ENCODE measurements at regions of chr15 and their contacts with region 1.

Region 1: DNA sequence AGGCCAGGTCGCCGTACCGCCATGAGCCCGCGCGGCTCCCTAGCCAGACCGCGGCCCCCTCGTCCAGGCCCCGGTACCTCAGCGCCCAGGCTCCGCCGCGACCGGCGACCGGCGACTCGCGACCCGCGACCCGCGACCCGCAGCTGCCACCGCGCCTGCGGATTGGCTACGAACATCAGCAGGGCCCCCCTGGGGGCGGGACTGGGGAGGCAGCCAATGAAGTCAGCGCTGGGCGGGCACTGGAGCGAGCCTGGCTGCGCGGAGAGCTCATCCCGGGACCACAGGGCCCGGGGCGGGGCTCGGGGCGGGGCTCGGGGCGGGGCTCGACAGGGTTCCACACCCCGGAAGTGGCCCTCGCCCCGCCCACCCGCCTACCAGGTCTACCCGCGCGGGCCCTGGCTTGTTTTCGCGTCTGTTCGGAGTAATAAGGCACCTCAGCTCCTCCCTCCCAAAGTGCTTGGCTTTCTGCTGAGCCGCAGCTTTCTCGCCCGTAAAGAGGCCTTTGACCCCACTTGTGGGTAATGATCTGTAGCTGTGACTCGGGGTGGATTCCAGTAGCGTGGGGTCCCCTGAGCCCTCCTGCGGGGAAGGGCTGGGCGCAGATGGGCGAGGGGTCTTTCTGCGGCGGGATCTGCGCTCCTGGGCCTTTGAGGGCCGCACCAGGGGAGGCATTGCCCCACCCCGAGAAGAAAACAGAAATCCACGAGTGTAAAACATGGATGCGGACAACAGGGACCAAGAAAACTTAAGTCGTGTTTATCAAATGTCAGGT is at the start of gene LYSMD4:
- DNase-seq: peak; percentile 97 to 99 (median 98)
- ATAC-seq: peak; percentile 99
- H3K4me3 ChIP-seq: peak within 1 kb of the TSS; percentile 69 to 80
- H3K4me3 Mint-ChIP-seq: peak within 1 kb of the TSS; percentile 89
- H3K27ac ChIP-seq: peak within 1 kb of the TSS; percentile 62 to 87
- H3K27ac Mint-ChIP-seq: peak within 1 kb of the TSS; percentile 95
- H3K4me1 ChIP-seq: peaks cover 13% of the 10 kb centered on the region
- H3K4me1 Mint-ChIP-seq: peaks cover 19% of the 10 kb centered on the region
- H3K27me3 ChIP-seq: no peaks in the 10 kb centered on the region
- H3K27me3 Mint-ChIP-seq: no peaks in the 10 kb centered on the region
- CTCF ChIP-seq: no peak
- total RNA-seq, gene LYSMD4: 7.6 to 7.7 TPM

Region 2: DNA sequence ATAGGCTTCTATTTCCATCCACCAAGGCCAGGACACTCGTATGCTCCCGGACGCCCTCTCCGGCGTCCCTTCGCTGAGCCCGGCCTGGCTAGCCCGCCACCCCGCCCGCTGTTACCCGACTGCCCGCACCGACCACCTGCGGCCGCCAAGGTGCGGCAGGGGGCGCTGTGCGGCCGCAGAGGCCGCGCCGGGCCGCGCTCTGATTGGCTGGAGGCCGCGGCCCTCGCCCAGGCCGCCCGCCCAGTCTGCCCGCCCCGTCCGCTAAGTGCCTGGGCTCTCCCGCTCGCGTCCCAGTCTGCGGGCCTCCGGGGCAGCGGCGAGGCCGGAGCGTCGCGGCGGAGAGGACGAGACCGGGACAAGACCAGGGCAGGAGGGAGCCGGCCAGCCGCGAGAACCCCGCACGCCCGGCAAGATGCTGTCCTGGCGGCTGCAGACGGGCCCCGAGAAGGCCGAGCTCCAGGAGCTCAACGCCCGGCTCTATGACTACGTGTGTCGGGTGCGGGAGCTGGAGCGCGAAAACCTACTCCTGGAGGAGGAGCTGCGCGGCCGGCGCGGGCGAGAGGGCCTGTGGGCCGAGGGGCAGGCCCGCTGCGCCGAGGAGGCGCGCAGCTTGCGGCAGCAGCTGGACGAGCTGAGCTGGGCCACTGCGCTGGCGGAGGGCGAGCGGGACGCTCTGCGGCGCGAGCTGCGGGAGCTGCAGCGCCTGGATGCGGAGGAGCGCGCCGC is 628.5 kb before region 1 on chr15 and contains the start of gene SYNM:
- CTCF ChIA-PET with region 1: no interaction called
- POLR2A ChIA-PET with region 1: no interaction called
- intact Hi-C with region 1: loop called in 1 of 2 experiments (anchors 10 kb)
- DNase-seq: peak in 2 of 9 experiments; percentile 49 to 60
- ATAC-seq: peak; percentile 15
- H3K4me3 ChIP-seq: peak within 1 kb of the TSS in 1 of 2 experiments; percentile 34
- H3K4me3 Mint-ChIP-seq: peak within 1 kb of the TSS; percentile 61
- H3K27ac ChIP-seq: peak within 1 kb of the TSS in 1 of 2 experiments; percentile 43
- H3K27ac Mint-ChIP-seq: peak within 1 kb of the TSS; percentile 45
- H3K4me1 ChIP-seq: no peaks in the 10 kb centered on the region
- H3K4me1 Mint-ChIP-seq: peaks cover 19% of the 10 kb centered on the region
- H3K27me3 ChIP-seq: peaks cover 0 to 5% of the 10 kb centered on the region in 2 experiments
- H3K27me3 Mint-ChIP-seq: peaks cover 33% of the 10 kb centered on the region
- CTCF ChIP-seq: no peak
- total RNA-seq, gene SYNM: 3.3 to 3.9 TPM

Region 3: DNA sequence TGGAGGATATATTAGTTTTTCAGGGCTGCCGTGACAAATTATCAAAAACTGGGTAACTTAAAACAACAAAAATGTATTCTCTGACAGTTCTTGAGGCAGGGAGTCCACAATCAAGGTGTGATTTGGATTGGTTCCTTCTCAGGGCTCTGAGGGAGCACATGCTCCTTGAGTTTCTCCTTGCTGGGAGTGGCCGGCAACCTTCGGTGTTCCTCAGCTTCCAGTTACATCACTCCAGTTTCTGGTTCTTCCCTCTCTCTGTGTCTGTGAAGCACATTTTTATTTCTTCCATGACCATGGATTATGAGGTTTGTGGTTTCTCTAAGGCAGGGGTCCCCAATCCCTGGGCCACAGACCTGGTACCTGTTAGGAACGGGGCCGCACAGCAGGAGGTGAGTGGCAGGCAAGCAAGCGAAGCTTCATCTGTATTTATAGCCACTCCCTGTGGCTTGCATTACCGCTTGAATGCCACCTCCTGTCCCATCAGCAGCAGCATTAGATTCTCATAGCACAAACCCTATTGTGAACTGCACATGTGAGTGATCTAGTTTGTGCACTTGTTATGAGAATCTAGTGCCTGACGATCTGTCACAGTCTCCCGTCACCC is 457.8 kb before region 1 on chr15:
- CTCF ChIA-PET with region 1: interaction called, 13 read pairs
- POLR2A ChIA-PET with region 1: no interaction called
- intact Hi-C with region 1: loop called in 1 of 2 experiments (anchors 1 kb)
- DNase-seq: no peak
- ATAC-seq: no peak
- H3K4me3 ChIP-seq: no peak overlapping the region
- H3K4me3 Mint-ChIP-seq: no peak overlapping the region
- H3K27ac ChIP-seq: no peak overlapping the region
- H3K27ac Mint-ChIP-seq: no peak overlapping the region
- H3K4me1 ChIP-seq: no peaks in the 10 kb centered on the region
- H3K4me1 Mint-ChIP-seq: peaks cover 13% of the 10 kb centered on the region
- H3K27me3 ChIP-seq: no peaks in the 10 kb centered on the region
- H3K27me3 Mint-ChIP-seq: no peaks in the 10 kb centered on the region
- CTCF ChIP-seq: no peak

Region 4: DNA sequence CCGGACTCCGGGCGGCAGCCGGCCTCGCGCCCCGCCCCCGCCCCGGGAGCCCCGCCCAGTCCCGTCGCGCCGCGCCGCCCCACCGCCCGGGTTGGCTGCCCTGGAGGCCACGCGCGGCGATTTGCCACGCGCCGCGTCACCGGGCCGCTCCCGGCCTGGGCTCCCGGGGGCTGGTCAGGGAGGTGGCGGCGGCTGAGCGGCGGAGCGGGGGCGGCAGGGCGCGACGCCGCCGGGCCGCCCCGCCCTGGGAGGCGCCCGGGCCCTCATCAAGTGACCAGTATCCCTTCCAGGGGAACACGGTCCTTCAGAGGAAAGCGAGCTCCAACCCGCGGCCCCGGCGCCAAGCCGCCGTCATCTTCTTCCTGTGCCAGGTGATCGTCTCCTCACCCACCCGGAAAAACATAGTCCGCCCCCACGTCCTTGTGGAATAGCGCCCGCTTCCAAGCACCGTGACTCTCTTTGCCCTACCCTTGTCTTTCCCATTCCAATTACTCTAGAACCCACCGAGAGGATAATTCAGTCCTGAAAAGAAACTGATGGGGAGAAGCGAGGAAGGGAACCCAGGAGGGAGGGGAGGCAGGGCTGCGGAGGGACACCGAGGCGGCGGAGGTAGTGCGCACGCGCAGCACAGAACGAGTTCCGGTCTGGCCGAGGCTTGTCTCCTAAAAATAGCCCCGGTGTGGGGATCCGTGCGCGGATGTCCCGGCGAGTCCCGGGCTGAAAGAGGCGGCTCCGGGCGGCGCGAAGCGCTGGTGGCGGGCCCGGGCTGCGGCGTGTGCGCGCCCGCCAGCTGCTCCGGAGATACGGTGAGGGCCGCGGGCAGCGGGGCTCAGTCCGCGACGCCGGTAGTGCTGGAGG is 167.9 kb before region 1 on chr15 and contains the start of gene MEF2A:
- CTCF ChIA-PET with region 1: no interaction called
- POLR2A ChIA-PET with region 1: interaction called, 4 read pairs
- intact Hi-C with region 1: loop called (anchors 1 to 2 kb)
- DNase-seq: peak; percentile 81 to 96 (median 91)
- ATAC-seq: peak; percentile 66
- H3K4me3 ChIP-seq: peak within 1 kb of the TSS; percentile 74 to 91
- H3K4me3 Mint-ChIP-seq: peak within 1 kb of the TSS; percentile 96
- H3K27ac ChIP-seq: peak within 1 kb of the TSS; percentile 64 to 90
- H3K27ac Mint-ChIP-seq: peak within 1 kb of the TSS; percentile 96
- H3K4me1 ChIP-seq: peaks cover 40% of the 10 kb centered on the region
- H3K4me1 Mint-ChIP-seq: peaks cover 55% of the 10 kb centered on the region
- H3K27me3 ChIP-seq: no peaks in the 10 kb centered on the region
- H3K27me3 Mint-ChIP-seq: no peaks in the 10 kb centered on the region
- CTCF ChIP-seq: no peak
- total RNA-seq, gene MEF2A: 20.3 to 24.9 TPM

Region 5: DNA sequence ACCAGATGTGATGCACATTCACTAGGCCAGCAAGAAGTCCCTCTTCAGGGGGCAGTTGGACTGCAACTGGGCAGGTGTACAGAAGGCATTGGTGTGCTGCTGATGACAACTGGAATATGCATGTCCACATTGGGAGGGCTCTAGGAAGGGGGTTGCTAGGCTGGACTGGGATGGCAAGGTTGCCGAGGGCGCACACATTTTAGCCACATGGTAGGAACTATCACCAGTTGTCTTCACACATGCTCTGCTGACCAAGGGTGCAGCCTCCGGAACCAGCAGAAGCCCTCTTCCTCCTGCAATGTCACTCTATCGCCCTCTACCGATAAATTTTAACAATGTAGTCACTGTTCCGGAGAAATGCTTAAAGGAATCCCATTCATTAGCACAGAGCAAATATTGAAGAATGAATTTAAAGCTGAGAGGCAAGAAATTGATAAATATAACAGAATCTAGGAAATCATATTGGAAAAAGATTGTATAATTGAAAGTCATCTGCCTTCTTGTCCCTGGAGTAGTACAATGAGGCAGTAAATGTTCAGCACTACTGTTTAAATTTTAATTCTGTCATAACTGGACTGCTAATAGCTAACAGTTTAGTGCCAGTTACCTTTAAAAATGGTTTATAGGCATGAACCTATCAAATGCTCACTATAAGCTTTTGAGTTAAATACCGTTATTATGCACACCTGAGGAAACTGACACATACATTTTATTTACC is 22.4 kb after region 1 on chr15:
- CTCF ChIA-PET with region 1: interaction called, 11 read pairs
- POLR2A ChIA-PET with region 1: interaction called, 3 read pairs
- intact Hi-C with region 1: no loop called
- DNase-seq: peak; percentile 8 to 76 (median 24)
- ATAC-seq: peak; percentile 71
- H3K4me3 ChIP-seq: no peak overlapping the region
- H3K4me3 Mint-ChIP-seq: no peak overlapping the region
- H3K27ac ChIP-seq: no peak overlapping the region
- H3K27ac Mint-ChIP-seq: no peak overlapping the region
- H3K4me1 ChIP-seq: peaks cover 4% of the 10 kb centered on the region
- H3K4me1 Mint-ChIP-seq: peaks cover 3% of the 10 kb centered on the region
- H3K27me3 ChIP-seq: no peaks in the 10 kb centered on the region
- H3K27me3 Mint-ChIP-seq: no peaks in the 10 kb centered on the region
- CTCF ChIP-seq: peak; percentile 89

Region 6: DNA sequence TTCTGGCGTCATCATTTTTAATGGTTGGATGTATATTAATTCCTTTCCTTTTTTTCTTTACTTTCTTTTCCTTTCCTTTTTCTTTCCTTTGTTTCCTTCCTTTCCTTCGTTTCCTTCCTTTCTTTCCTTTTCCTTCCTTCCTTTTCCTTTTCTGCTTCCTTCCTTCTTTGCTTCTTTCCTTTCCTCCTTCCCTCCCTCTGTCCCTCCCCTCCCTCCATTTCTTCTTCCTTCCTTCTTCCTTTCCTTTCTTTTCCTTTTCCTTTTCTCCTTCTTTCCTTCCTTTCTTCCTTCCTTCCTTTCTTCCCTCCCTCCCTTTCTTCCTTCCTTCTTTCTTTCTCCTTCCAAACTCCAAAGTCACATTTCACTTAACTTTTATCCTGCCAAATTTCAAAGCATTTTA is 54.7 kb after region 1 on chr15:
- CTCF ChIA-PET with region 1: no interaction called
- POLR2A ChIA-PET with region 1: no interaction called
- intact Hi-C with region 1: no loop called
- DNase-seq: no peak
- ATAC-seq: no peak
- H3K4me3 ChIP-seq: no peak overlapping the region
- H3K4me3 Mint-ChIP-seq: no peak overlapping the region
- H3K27ac ChIP-seq: no peak overlapping the region
- H3K27ac Mint-ChIP-seq: no peak overlapping the region
- H3K4me1 ChIP-seq: no peaks in the 10 kb centered on the region
- H3K4me1 Mint-ChIP-seq: no peaks in the 10 kb centered on the region
- H3K27me3 ChIP-seq: no peaks in the 10 kb centered on the region
- H3K27me3 Mint-ChIP-seq: peaks cover 5% of the 10 kb centered on the region
- CTCF ChIP-seq: no peak

Region 7: DNA sequence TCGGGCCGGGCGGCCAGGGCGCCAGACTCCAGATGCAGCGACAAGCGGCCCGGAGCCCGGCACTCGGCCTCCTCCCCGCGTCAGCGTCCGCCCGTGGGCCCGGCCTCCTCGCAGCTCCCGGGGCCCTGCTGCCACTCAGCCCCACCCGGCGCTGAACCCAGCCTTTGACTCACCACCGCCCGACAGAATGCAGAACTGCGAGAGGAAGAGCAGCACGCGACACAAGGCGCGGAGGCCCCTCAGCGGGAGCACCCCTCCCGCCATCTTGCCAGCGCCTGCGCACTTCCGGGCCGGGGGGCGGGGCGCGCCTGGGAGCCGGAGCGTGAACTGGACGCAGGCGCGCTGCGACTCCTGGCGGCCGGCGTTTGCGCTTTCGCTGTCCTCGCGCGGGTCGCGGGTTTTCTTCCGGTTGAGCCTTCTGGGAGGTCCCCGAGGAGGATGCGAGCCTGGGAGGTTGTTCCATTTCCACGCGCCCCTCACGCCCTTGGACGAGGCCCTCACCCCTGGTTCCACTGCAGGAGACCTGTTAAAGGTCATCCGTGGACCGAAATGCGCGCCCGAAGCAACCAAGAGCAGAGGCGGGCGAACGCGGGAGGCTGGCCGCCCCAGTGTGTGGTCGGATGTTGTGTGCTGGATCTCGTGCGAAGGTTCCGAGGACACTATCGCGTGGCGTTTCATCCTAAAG is 1918.8 kb after region 1 on chr15 and contains the start of gene TM2D3:
- CTCF ChIA-PET with region 1: no interaction called
- POLR2A ChIA-PET with region 1: no interaction called
- intact Hi-C with region 1: loop called in 1 of 2 experiments (anchors 5 kb)
- DNase-seq: peak; percentile 89 to 98 (median 95)
- ATAC-seq: peak; percentile 92
- H3K4me3 ChIP-seq: peak within 1 kb of the TSS; percentile 91 to 99
- H3K4me3 Mint-ChIP-seq: peak within 1 kb of the TSS; percentile 90
- H3K27ac ChIP-seq: peak within 1 kb of the TSS; percentile 97
- H3K27ac Mint-ChIP-seq: peak within 1 kb of the TSS; percentile 96
- H3K4me1 ChIP-seq: peaks cover 26% of the 10 kb centered on the region
- H3K4me1 Mint-ChIP-seq: peaks cover 39% of the 10 kb centered on the region
- H3K27me3 ChIP-seq: no peaks in the 10 kb centered on the region
- H3K27me3 Mint-ChIP-seq: no peaks in the 10 kb centered on the region
- CTCF ChIP-seq: peak; percentile 76
- total RNA-seq, gene TM2D3: 76.1 to 76.7 TPM